Adrenal gland (tissue), 19 donors: ENCODE measurements at regions of chr2 and their contacts with region 1.

Region 1: DNA sequence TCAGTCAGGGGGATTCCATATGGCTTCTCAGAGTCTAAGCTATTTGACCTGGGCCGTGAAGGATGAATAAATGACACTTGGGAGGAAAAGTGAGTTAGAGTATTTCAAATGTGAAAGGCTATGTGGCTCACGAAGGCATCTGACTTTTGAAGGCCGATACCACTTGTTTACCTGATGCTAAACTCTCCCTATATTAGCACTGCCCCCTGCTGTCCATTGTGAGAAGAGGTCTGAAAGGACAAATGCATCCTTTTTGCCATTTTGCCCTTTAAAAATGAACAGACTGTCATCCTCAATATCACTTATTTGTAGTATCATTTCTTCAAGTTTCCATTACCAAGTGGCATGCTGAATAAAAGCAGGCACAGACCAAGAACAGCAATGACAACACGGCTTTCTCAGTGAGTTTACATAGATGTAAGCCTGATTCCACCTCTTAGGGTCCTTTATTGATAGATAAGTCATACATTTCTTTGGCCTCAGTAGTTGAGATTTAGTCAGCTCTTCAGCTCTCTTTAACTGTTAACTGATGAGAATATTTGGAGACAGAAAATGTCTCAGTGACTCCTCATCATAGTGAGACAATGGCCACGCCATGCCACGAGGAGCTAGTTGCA is 40.1 kb downstream of the DOCK10 start:
- DNase-seq: peak; percentile 65 to 82 (median 78)
- H3K4me3 ChIP-seq: no peak overlapping the region
- H3K27ac ChIP-seq: peak overlapping the region in 2 of 5 donors; percentile 36 to 45
- H3K4me1 ChIP-seq: peaks cover 0 to 4% of the 10 kb centered on the region in 2 donors
- H3K27me3 ChIP-seq: no peaks in the 10 kb centered on the region
- CTCF ChIP-seq: peak; percentile 73 to 89 (median 84)
- POLR2A ChIP-seq: no peak

Region 2: DNA sequence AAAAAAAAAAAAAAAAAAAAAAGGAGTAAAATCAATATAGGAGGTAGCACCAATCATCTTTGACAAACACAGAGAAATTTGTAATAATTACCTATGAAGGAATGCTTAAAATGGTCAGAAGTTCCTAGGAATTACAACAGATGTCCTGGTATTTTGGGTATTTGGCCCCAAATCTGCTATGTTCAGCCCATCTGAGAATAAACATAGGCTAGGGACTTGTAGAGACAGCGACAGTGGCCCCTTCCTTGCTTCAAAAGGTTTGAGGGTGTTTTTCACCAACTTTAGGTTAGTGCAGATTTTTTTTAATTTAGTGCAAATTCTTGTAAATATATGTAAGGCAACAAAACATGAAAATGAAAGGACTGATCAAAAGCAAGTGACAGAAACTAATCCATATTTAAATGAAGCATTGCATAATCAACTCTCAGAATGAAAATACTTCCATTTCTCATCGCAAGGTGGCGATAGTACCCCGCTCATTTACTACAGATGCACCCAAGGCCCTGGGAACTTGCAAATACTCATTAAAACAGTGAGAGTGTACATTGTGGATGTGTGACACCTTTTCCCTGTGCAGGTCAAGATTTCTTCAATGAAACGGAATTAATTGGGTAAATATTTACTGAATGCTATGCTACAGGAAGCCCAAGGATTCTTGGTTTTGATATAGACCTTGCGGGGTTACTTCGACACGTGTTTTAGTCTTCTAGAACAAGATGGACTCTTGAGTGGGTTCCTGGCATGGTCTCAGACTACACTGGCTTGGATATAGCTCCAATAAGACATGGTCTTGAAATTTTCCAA is 644.8 kb before region 1 on chr2:
- intact Hi-C with region 1: loop called in 1 of 2 experiments (anchors 10 kb)
- DNase-seq: peak; percentile 36 to 77 (median 53)
- H3K4me3 ChIP-seq: no peak overlapping the region
- H3K27ac ChIP-seq: no peak overlapping the region
- H3K4me1 ChIP-seq: no peaks in the 10 kb centered on the region
- H3K27me3 ChIP-seq: no peaks in the 10 kb centered on the region
- CTCF ChIP-seq: peak; percentile 65 to 94 (median 85)
- POLR2A ChIP-seq: no peak

Region 3: DNA sequence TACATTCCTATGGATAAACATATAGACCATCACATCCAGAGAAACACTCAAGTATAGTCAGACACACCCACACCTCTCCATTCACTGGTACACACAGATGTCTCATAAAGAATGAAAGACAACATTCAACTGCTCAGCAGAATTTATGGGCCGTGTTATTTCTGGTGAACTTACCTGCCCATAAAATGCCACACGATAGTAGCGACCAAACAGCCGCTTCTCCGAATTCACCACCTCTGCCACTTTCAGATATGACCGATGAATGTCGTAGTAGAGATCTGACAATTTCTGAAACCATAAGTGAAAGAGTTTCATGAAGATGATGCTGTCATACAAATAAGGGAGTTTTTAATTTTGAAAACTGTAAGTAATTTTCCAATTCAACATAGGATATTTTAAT is 215.3 kb before region 1 on chr2:
- intact Hi-C with region 1: loop called in 1 of 2 experiments (anchors 5 kb)
- DNase-seq: no peak
- H3K4me3 ChIP-seq: no peak overlapping the region
- H3K27ac ChIP-seq: no peak overlapping the region
- H3K4me1 ChIP-seq: peaks cover 0 to 3% of the 10 kb centered on the region in 2 donors
- H3K27me3 ChIP-seq: no peaks in the 10 kb centered on the region
- CTCF ChIP-seq: no peak
- POLR2A ChIP-seq: no peak

Region 4: GRCh38 chr2:224885836-224886547 is 116.2 kb before region 1 on chr2:
- intact Hi-C with region 1: no loop called
- DNase-seq: no peak
- H3K4me3 ChIP-seq: no peak overlapping the region
- H3K27ac ChIP-seq: no peak overlapping the region
- H3K4me1 ChIP-seq: peaks cover 0 to 17% of the 10 kb centered on the region in 2 donors
- H3K27me3 ChIP-seq: no peaks in the 10 kb centered on the region
- CTCF ChIP-seq: no peak
- POLR2A ChIP-seq: no peak

Region 5: DNA sequence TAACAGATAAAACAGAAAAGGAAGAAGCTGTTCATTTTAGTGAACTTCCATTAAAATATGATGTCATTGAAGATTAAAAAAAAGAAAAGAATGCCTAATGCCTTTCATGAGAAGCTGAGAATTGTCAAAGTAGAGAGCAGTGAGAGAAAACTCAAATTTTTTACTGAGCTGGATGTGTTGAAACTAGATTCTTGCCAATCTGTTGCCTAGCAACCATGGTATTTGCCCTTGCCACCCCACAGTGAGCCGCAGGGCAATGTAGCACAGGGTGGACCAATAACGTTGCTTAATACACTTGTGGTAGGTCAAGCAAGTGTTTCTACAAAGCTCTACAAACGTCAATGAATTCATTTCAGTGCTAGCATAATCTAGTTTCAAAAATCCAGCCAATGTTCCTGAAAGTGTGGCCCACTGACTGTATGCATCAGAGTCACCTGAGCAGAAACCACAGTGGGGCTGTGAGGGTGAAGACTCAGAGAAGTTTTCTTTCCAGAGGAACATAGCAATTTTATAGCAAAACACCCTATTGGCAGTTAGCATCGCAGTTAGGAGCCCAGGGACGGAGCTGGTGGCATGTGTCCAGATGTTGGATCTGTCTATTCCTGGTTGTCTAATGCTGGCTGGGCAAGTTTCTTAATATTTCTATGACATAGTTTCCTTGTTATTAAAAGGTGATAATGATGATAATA is 92.1 kb before region 1 on chr2:
- intact Hi-C with region 1: no loop called
- DNase-seq: peak; percentile 64 to 89 (median 84)
- H3K4me3 ChIP-seq: peak overlapping the region in 2 of 4 donors; percentile 4 to 26
- H3K27ac ChIP-seq: peak overlapping the region; percentile 61 to 92 (median 86)
- H3K4me1 ChIP-seq: peaks cover 18 to 22% of the 10 kb centered on the region in 2 donors
- H3K27me3 ChIP-seq: no peaks in the 10 kb centered on the region
- CTCF ChIP-seq: no peak
- POLR2A ChIP-seq: no peak